ENCODE measurements at regions of chr9 and their contacts with region 1.

Region 1: GRCh38 chr9:35553670-35554543 is 51.2 kb upstream of the TESK1 start:
- DNase-seq: peak; percentile 58
- H3K4me3 ChIP-seq: peak overlapping the region; percentile 27
- H3K27ac ChIP-seq: peak overlapping the region; percentile 78
- H3K4me1 ChIP-seq: peaks cover 39% of the 10 kb centered on the region
- H3K27me3 ChIP-seq: no peaks in the 10 kb centered on the region
- CTCF ChIP-seq: peak; percentile 96

Region 2: DNA sequence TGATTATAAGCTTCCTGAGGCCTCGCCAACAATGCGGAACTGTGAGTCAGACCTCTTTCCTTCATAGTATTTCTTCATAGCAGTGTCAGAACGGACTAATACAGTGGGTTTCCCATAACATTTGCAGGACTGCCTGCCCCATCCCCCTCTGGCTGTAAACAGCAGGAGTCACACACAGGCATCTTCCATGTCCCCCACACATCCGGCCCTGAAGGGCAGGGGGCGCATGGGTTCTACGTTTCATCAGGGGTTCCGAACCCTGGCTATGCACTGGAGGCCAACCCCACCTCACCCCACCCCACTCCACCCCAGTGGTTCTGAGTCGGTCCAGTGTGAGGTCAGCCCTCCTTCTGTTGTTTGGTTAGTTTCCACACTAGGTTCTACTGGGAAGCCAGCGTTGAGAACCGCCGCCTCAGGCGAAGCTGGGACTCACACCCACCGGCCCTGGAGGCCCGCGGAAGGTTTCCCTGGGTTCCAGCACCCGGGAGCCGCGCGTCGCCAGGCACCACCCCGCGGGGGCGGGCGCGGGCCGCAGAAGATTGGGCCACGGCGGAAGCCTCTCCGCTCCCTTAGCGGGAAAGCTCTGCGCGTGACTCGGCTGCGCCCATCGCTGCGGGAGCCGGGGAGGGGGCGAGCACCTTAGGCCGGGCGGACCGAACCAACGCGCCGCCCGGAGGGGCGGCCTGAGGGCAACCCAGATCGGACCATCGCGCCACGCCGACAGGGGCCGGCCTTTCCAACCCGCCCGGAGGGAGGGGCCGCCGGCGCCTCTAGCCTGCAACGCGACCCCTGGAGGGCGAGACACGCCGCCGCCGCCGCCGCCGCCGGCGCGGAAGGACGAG is 64.4 kb before region 1 on chr9 and contains the start of gene RUSC2:
- intact Hi-C with region 1: loop called (anchors 5 kb)
- DNase-seq: peak; percentile 84
- H3K4me3 ChIP-seq: peak within 1 kb of the TSS; percentile 89
- H3K27ac ChIP-seq: peak within 1 kb of the TSS; percentile 93
- H3K4me1 ChIP-seq: peaks cover 51% of the 10 kb centered on the region
- H3K27me3 ChIP-seq: no peaks in the 10 kb centered on the region
- CTCF ChIP-seq: peak; percentile 58
- total RNA-seq, gene RUSC2: 27.5 TPM

Measured in left ventricle myocardium inferior (tissue), 1 donor.